B cell (primary cell): ENCODE measurements at regions of chr18 and their contacts with region 1.

Region 1: DNA sequence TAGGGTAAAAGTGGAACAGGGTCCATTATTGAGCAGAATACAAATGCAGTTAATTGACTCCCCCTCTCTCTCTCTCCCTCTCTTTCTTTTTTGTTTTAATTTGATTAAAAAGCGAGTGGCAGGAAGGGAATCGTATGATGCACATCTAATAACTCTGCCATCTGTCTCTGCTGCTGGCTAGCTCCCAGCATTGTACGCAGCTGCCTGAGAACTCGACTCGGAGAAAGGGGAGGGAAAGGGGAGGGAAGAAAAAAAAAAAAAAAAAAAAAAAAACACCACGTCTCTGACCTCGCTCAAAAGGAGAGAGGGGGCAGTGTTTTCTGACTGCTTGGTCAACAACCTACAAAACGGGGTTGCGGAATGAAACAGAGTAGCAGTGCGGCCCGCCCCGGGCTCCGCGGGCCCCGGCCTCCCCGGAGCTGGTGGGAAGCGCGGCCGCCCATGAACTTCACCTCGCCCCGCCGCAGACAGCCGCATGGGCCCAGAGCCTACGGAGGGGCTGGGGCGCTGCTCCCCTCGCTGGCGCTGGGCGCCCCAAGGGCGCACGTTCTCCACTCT is 265.7 kb downstream of the TCF4 start:
- DNase-seq: peak; percentile 83
- ATAC-seq: peak; percentile 63
- H3K4me3 ChIP-seq: peak overlapping the region; percentile 79 to 97 (median 84)
- H3K4me3 Mint-ChIP-seq: peak overlapping the region; percentile 96
- H3K27ac ChIP-seq: peak overlapping the region; percentile 85 to 93
- H3K27ac Mint-ChIP-seq: peak overlapping the region; percentile 92
- H3K4me1 ChIP-seq: peaks cover 36 to 59% of the 10 kb centered on the region in 2 donors
- H3K4me1 Mint-ChIP-seq: peaks cover 62% of the 10 kb centered on the region
- H3K27me3 ChIP-seq: no peaks in the 10 kb centered on the region
- H3K27me3 Mint-ChIP-seq: no peaks in the 10 kb centered on the region
- CTCF ChIP-seq: no peak

Region 2: GRCh38 chr18:54269893-54270844 is 1052.1 kb before region 1 on chr18:
- CTCF ChIA-PET with region 1: interaction called, 3 read pairs
- POLR2A ChIA-PET with region 1: no interaction called
- intact Hi-C with region 1: loop called (anchors 5 kb)
- DNase-seq: peak; percentile 67
- ATAC-seq: peak; percentile 31
- H3K4me3 ChIP-seq: peak overlapping the region; percentile 74 to 89 (median 81)
- H3K4me3 Mint-ChIP-seq: peak overlapping the region; percentile 97
- H3K27ac ChIP-seq: peak overlapping the region; percentile 84 to 90
- H3K27ac Mint-ChIP-seq: peak overlapping the region; percentile 99
- H3K4me1 ChIP-seq: peaks cover 16 to 28% of the 10 kb centered on the region in 2 donors
- H3K4me1 Mint-ChIP-seq: peaks cover 31% of the 10 kb centered on the region
- H3K27me3 ChIP-seq: no peaks in the 10 kb centered on the region
- H3K27me3 Mint-ChIP-seq: no peaks in the 10 kb centered on the region
- CTCF ChIP-seq: peak; percentile 73

Region 3: DNA sequence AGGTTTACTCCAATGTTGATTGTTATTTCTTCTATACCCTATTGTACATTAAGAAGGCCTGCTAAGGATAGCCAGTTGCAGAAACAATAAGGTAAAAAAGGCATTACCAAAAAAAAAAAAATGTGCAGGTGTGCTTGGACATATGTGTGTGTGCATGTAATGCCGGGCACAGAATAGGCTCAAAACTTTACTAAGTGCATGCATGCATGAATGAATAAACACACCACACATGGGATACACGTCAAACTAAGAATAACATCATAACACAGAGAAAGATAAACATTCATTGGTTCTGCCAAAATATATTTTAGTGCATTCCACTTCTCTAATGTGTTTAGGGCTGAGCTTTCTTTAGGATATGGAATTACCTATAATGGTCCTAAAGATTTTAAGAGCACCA is 32.5 kb before region 1 on chr18:
- CTCF ChIA-PET with region 1: interaction called, 3 read pairs
- POLR2A ChIA-PET with region 1: no interaction called
- intact Hi-C with region 1: loop called (anchors 5 kb)
- DNase-seq: no peak
- ATAC-seq: peak; percentile 31
- H3K4me3 ChIP-seq: no peak overlapping the region
- H3K4me3 Mint-ChIP-seq: peak overlapping the region; percentile 46
- H3K27ac ChIP-seq: peak overlapping the region in 1 of 2 donors; percentile 17
- H3K27ac Mint-ChIP-seq: peak overlapping the region; percentile 59
- H3K4me1 ChIP-seq: peaks cover 14 to 35% of the 10 kb centered on the region in 2 donors
- H3K4me1 Mint-ChIP-seq: peaks cover 81% of the 10 kb centered on the region
- H3K27me3 ChIP-seq: no peaks in the 10 kb centered on the region
- H3K27me3 Mint-ChIP-seq: no peaks in the 10 kb centered on the region
- CTCF ChIP-seq: no peak

Region 4: DNA sequence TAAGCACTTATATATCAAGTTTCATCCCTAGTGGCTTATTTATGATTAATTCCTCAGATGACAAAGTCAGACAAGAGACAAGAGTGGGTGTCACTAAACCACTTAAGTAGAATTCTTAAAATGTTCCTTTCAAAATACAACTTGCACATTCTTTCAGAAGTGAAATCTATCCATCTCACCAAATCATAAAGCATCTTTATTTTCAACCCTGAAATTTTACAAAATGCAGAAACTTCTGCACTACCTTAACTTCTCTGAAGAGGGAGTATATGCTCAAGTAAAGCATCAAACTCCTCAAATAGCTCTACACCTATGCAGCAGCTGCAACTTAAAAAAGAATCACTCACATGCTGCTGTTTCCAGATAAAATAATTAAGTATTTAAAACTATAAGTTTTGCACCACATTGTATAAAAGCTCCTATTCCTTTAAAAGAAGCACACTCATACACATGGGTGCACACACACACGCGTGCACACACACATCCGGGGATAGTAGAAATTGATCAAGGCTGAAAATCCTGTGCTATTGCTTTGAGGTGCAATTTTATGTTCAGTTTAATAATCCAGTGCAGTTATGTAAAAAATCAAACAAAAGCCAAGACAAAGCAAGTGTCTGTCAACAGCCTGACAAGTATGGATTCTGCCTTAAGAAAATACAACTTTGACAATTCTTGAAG is 21.3 kb after region 1 on chr18:
- CTCF ChIA-PET with region 1: interaction called, 11 read pairs
- POLR2A ChIA-PET with region 1: interaction called, 7 read pairs
- intact Hi-C with region 1: no loop called
- DNase-seq: peak; percentile 56
- ATAC-seq: peak; percentile 65
- H3K4me3 ChIP-seq: no peak overlapping the region
- H3K4me3 Mint-ChIP-seq: no peak overlapping the region
- H3K27ac ChIP-seq: no peak overlapping the region
- H3K27ac Mint-ChIP-seq: no peak overlapping the region
- H3K4me1 ChIP-seq: peaks cover 9 to 14% of the 10 kb centered on the region in 2 donors
- H3K4me1 Mint-ChIP-seq: peaks cover 19% of the 10 kb centered on the region
- H3K27me3 ChIP-seq: no peaks in the 10 kb centered on the region
- H3K27me3 Mint-ChIP-seq: no peaks in the 10 kb centered on the region
- CTCF ChIP-seq: peak; percentile 79

Region 5: DNA sequence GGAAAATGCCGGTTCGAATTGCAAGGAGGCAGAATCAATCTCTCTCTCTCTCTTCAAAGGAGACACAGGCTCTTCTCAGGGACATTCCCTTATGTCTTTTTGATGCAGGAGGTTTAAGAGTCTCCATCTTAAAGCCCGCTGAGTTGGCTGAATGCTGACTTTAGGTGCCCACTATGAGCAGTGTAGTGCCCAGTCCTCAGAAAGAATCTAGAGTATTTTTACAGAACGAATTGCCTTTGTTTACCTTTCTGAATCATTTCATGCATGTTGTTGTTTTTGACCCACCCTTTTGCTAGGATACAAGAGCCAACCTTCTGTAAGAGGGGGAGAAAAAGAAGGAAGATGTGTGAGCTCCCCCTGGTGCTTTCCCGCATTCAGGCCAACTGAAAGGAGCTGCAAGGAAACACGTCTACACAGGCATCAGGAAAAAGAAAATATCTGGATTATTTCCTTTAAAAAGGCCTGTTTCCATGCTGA is 459.3 kb after region 1 on chr18:
- CTCF ChIA-PET with region 1: no interaction called
- POLR2A ChIA-PET with region 1: interaction called, 4 read pairs
- intact Hi-C with region 1: loop called (anchors 10 kb)
- DNase-seq: peak; percentile 23
- ATAC-seq: no peak
- H3K4me3 ChIP-seq: no peak overlapping the region
- H3K4me3 Mint-ChIP-seq: peak overlapping the region; percentile 87
- H3K27ac ChIP-seq: peak overlapping the region in 1 of 2 donors; percentile 71
- H3K27ac Mint-ChIP-seq: peak overlapping the region; percentile 95
- H3K4me1 ChIP-seq: peaks cover 19 to 27% of the 10 kb centered on the region in 2 donors
- H3K4me1 Mint-ChIP-seq: peaks cover 36% of the 10 kb centered on the region
- H3K27me3 ChIP-seq: peaks cover 0 to 4% (median 0%) of the 10 kb centered on the region in 4 experiments
- H3K27me3 Mint-ChIP-seq: peaks cover 11% of the 10 kb centered on the region
- CTCF ChIP-seq: no peak

Region 6: DNA sequence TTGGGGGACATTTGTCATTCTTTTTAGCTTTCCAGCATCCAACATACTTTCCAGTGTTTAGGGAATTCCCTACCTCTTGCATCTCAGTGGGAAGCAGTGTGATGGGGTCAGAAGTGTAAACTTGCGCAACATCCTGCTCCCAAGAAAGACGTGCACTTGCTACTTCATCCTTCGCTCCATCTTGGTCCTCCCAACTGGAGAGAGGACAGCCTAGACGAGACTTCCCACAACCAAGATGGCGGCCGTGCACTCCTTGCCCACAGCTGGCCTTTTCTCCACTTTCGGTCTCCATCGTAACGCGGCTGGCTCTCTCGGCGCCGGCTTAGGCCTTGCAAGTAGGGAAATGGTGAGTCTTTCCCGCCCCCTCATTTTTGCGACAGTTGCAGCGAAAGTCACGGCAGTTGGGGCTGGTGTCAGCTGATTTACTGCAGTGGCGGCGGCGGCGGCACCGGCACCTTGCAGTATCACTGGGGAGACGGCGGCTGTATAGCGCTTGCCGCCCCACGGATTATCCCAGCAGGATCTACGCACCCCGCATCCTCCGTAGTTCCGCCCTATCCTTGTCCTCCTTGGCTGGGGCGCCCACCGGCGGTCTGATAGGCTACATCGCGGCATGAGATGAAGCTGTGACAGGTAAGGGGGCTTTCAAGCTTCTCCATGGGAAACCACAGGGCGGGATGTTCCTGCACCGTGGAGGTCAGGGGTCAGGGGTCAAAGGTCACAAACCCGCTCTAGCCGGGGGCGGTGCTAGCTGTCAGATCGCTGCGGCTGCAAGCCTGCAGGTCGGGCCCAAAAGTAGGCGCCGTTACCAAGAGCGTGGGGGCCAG is 1328.9 kb after region 1 on chr18 and contains the start of gene WDR7:
- CTCF ChIA-PET with region 1: no interaction called
- POLR2A ChIA-PET with region 1: no interaction called
- intact Hi-C with region 1: loop called (anchors 5 kb)
- DNase-seq: peak; percentile 97
- ATAC-seq: peak; percentile 93
- H3K4me3 ChIP-seq: peak within 1 kb of the TSS; percentile 67 to 95 (median 84)
- H3K4me3 Mint-ChIP-seq: peak within 1 kb of the TSS; percentile 92
- H3K27ac ChIP-seq: peak within 1 kb of the TSS; percentile 52 to 88
- H3K27ac Mint-ChIP-seq: peak within 1 kb of the TSS; percentile 88
- H3K4me1 ChIP-seq: peaks cover 19 to 26% of the 10 kb centered on the region in 2 donors
- H3K4me1 Mint-ChIP-seq: peaks cover 38% of the 10 kb centered on the region
- H3K27me3 ChIP-seq: no peaks in the 10 kb centered on the region
- H3K27me3 Mint-ChIP-seq: no peaks in the 10 kb centered on the region
- CTCF ChIP-seq: no peak
- total RNA-seq, gene WDR7: 45.0 and 48.0 TPM in 2 replicates